ENCODE measurements at regions of chr1 and their contacts with region 1.

Region 1: DNA sequence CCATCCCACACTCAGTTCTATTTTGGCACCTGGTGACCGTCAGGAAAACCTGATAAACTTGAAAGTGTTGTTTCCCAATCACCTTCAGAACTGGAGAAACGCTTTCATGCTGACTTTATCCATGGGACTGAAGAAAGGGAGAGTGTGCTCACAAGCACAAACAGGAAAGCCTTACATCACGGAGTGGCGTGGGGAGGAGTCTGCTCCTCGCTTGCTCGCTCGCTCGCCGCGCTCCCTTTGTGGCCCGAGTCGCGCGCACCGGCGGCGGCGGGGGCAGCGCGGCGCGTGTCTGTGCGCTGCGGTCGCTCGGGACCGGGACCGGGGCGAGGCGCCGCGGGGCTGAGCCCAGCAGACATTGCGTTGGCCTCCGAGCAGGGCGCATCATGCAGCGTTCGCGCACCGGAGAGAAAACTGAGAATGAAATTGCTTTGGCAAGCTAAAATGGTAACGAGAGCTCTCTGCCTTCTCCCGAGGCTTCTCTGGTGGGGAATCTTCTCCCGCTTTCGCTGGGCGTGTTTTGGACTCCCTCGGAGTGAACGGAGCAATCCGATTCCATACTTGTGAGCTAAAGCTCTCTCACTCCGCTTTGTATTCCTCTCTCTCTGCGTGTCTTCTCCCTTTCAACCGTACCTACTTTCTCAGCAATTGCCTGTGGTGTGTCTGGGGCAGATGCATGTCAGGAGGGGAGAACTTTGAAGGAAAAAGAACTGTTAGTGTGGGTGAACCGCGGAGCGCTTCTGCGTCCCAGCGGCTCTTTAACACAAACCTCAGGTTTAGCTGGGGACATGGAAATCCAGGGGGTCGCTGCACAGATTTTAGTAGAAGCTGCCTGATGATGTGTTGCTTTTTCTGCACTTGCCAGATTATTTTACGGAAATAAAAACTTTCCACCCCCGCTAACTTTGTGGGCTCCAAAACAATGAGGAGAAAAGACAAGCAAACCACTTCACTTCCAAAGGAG is at the start of gene RGL1:
- DNase-seq: peak; percentile 93
- H3K4me3 ChIP-seq: peak within 1 kb of the TSS; percentile 71
- H3K27ac ChIP-seq: peak within 1 kb of the TSS; percentile 94
- H3K4me1 ChIP-seq: peaks cover 34% of the 10 kb centered on the region
- H3K27me3 ChIP-seq: no peaks in the 10 kb centered on the region
- CTCF ChIP-seq: no peak
- total RNA-seq, gene RGL1: 67.2 and 74.0 TPM in 2 replicates

Region 2: DNA sequence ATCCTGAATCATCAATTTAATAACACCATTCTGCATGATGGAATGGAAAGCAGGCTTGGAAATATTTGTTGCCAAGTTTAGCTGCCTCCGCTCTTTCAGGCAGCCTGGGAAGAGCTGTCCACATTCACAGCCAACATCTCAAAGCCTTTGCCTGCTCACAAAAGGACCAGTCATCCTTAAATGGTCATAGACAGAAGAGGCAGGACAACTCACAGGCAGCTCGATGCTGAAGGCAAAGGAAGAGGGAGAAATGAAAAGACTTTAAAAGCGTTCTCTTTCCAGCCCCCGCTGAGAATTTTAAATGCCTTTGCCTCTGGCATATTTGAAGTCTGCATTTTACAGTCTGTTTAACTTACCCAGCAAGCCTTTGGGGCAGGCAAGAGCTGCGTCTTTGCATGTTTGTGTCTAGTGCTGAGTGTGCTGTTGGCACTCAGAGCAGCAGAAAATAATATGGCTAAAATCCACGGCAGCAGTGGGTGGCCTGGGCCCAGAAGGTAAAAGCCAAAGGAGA is 455.9 kb before region 1 on chr1:
- CTCF ChIA-PET with region 1: no interaction called
- POLR2A ChIA-PET with region 1: no interaction called
- intact Hi-C with region 1: no loop called
- DNase-seq: peak; percentile 48
- H3K4me3 ChIP-seq: no peak overlapping the region
- H3K27ac ChIP-seq: no peak overlapping the region
- H3K4me1 ChIP-seq: no peaks in the 10 kb centered on the region
- H3K27me3 ChIP-seq: no peaks in the 10 kb centered on the region
- CTCF ChIP-seq: no peak

Region 3: GRCh38 chr1:183887826-183888819 is 83.0 kb after region 1 on chr1:
- CTCF ChIA-PET with region 1: no interaction called
- POLR2A ChIA-PET with region 1: no interaction called
- intact Hi-C with region 1: loop called (anchors 5 kb)
- DNase-seq: peak; percentile 64
- H3K4me3 ChIP-seq: no peak overlapping the region
- H3K27ac ChIP-seq: peak overlapping the region; percentile 87
- H3K4me1 ChIP-seq: peaks cover 85% of the 10 kb centered on the region
- H3K27me3 ChIP-seq: no peaks in the 10 kb centered on the region
- CTCF ChIP-seq: no peak